Panc1 (cell line): ENCODE measurements at regions of chr10 and their contacts with region 1.

Region 1: DNA sequence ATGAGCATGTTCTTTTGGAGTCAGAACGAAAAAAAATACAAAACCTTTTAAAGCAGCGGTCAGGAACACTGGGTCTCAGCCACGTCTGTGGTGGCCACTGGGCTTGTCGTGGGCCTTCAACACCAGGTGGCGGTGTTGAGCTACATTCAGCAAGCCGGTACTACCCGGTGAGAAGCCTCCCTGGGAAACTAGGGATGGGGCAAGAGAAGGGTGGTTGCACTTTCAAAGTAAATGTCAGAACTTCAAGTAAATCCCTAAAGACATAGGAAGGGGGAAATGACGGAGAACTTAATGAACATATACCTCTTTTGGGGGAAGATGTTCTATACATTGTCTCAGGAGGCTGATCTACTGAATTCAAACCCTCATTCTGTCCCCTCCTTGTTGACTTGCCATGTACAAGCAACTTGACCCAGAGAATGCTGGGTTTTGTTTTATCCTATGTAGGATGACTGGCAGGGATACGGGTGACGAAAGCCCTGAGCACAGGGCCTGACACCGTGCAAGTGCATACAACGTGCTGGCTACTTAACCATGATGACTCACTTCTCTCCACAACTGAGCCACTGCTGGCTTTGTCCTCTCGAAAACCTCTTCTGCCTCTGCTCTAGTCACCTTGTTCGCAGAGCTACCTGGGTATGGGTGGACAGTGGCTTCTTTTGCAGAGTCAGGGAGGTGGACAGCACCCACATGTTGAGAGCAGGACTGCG is 49.0 kb upstream of the BAMBI start:
- DNase-seq: peak; percentile 43
- ATAC-seq: peak; percentile 91
- H3K4me3 ChIP-seq: no peak overlapping the region
- H3K27ac ChIP-seq: no peak overlapping the region
- H3K4me1 ChIP-seq: no peaks in the 10 kb centered on the region
- H3K27me3 ChIP-seq: no peaks in the 10 kb centered on the region
- CTCF ChIP-seq: peak; percentile 83

Region 2: GRCh38 chr10:29304264-29305030 is 676.1 kb after region 1 on chr10:
- CTCF ChIA-PET with region 1: interaction called, 4 read pairs
- POLR2A ChIA-PET with region 1: no interaction called
- in situ Hi-C with region 1: no loop called
- intact Hi-C with region 1: loop called (anchors 10 kb)
- DNase-seq: peak; percentile 39
- ATAC-seq: peak; percentile 85; the same call in 1 of the 2 replicates
- H3K4me3 ChIP-seq: no peak overlapping the region
- H3K27ac ChIP-seq: peak overlapping the region; percentile 51; the same call in 1 of the 2 replicates
- H3K4me1 ChIP-seq: no peaks in the 10 kb centered on the region; the same call in 1 of the 2 replicates
- H3K27me3 ChIP-seq: no peaks in the 10 kb centered on the region
- CTCF ChIP-seq: peak; percentile 75